Gastrocnemius medialis (tissue), 4 donors: ENCODE measurements at regions of chr1 and their contacts with region 1.

Region 1: GRCh38 chr1:206792939-206793607 is 20.8 kb upstream of the IL10 start:
- DNase-seq: no peak
- ATAC-seq: no peak
- H3K4me3 ChIP-seq: no peak overlapping the region
- H3K27ac ChIP-seq: no peak overlapping the region
- H3K4me1 ChIP-seq: no peaks in the 10 kb centered on the region
- H3K27me3 ChIP-seq: no peaks in the 10 kb centered on the region
- CTCF ChIP-seq: no peak
- POLR2A ChIP-seq: no peak

Region 2: DNA sequence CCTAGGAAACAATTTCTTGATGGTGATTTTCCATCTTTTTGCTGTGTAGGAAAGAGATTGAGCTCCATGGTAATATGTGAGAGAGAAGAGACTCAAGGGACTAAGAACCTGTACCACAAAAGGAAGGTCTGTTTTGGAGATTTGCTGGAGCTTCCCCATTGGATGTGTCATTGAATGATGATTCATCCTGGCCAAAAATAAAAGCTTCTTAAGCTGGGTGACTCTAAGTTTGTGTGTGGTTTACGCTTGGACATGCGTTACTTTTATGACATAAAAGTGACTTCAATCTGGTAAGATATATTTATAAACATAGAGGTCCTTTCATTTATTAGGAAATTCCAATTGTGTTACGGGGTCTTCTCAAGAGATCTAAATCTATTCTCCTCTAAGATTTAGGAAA is 39.9 kb before region 1 on chr1:
- in situ Hi-C with region 1: no loop called
- intact Hi-C with region 1: loop called (anchors 1 kb)
- DNase-seq: no peak
- ATAC-seq: no peak
- H3K4me3 ChIP-seq: no peak overlapping the region
- H3K27ac ChIP-seq: no peak overlapping the region
- H3K4me1 ChIP-seq: no peaks in the 10 kb centered on the region
- H3K27me3 ChIP-seq: no peaks in the 10 kb centered on the region
- CTCF ChIP-seq: no peak
- POLR2A ChIP-seq: no peak

Region 3: GRCh38 chr1:206839857-206840256 is 46.8 kb after region 1 on chr1:
- in situ Hi-C with region 1: no loop called
- intact Hi-C with region 1: no loop called
- DNase-seq: no peak
- ATAC-seq: no peak
- H3K4me3 ChIP-seq: no peak overlapping the region
- H3K27ac ChIP-seq: no peak overlapping the region
- H3K4me1 ChIP-seq: no peaks in the 10 kb centered on the region
- H3K27me3 ChIP-seq: peaks cover 0 to 2% (median 0%) of the 10 kb centered on the region in 3 donors
- CTCF ChIP-seq: no peak
- POLR2A ChIP-seq: no peak